ENCODE measurements at regions of chr16 and their contacts with region 1.

Region 1: GRCh38 chr16:75566040-75566810 is at the start of gene GABARAPL2:
- DNase-seq: peak; percentile 77
- H3K4me3 Mint-ChIP-seq: peak within 1 kb of the TSS; percentile 83
- H3K27ac Mint-ChIP-seq: peak within 1 kb of the TSS; percentile 80
- H3K4me1 Mint-ChIP-seq: peaks cover 7% of the 10 kb centered on the region
- H3K27me3 Mint-ChIP-seq: peaks cover 13% of the 10 kb centered on the region
- CTCF ChIP-seq: no peak
- total RNA-seq, gene GABARAPL2: 61.5 and 70.5 TPM in 2 replicates

Region 2: DNA sequence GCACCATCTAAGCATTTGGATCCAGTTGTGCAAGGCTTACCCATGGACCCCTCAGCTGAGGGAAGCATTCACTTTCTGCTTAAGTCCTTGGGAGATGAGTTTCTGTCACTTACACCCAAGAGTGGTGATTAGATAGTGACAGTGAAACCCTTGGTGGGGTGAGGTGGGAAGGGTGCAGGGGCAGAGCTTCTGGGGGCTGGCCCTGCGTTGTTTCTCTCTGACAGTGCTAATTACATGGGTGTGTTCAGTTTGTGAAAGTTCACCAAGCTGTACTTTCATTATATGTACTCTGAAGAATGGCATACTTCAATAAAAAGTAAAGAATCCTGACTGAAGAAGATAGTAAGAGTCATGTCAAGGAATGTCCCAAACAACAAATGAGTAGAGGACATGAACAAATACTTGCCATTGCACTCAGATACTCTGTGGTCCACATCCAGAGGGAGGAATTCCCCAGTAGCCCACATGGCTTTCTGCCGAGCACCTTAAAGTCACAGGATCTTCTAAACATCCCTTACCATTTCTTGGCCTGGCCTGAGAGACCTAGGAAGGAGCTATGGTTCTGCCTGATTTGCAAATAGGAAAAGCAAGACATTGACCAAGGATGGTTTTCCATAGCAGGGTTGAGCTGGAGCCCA is 79.4 kb before region 1 on chr16:
- CTCF ChIA-PET with region 1: interaction called, 3 read pairs
- POLR2A ChIA-PET with region 1: interaction called, 26 read pairs
- intact Hi-C with region 1: no loop called
- DNase-seq: no peak
- H3K4me3 Mint-ChIP-seq: no peak overlapping the region
- H3K27ac Mint-ChIP-seq: peak overlapping the region; percentile 70
- H3K4me1 Mint-ChIP-seq: peaks cover 36% of the 10 kb centered on the region
- H3K27me3 Mint-ChIP-seq: no peaks in the 10 kb centered on the region
- CTCF ChIP-seq: no peak

Region 3: DNA sequence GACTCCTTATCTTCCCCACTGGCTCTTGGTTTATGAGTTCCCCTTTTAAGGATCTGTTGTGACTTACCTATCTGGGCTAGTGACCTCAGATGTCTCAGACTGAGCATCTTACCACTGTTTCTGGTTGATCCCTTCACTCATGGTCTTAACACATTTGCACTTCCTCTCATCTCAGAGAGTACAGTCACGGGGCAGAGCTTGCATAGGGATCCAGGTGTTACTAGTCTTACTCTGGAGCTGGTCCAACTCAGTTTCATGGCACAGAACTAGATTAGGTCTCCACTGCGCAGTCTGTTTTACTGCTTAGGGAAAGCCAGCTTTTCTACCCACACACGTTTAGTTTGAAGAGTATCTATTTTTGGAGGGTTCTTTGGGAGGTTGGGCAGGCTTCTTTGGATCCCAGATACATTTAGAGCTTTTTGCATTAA is 10.2 kb after region 1 on chr16:
- CTCF ChIA-PET with region 1: interaction called, 3 read pairs
- POLR2A ChIA-PET with region 1: interaction called, 34 read pairs
- intact Hi-C with region 1: no loop called
- DNase-seq: no peak
- H3K4me3 Mint-ChIP-seq: no peak overlapping the region
- H3K27ac Mint-ChIP-seq: no peak overlapping the region
- H3K4me1 Mint-ChIP-seq: no peaks in the 10 kb centered on the region
- H3K27me3 Mint-ChIP-seq: no peaks in the 10 kb centered on the region
- CTCF ChIP-seq: no peak

Measured in MCF 10A (cell line).